A549 (cell line): ENCODE measurements at regions of chr12 and their contacts with region 1.

Region 1: GRCh38 chr12:13023811-13024530 is 20.2 kb upstream of the FAM234B start:
- DNase-seq: peak; percentile 45 to 73
- ATAC-seq: peak; percentile 97 to 98
- H3K4me3 ChIP-seq: no peak overlapping the region
- H3K27ac ChIP-seq: no peak overlapping the region
- H3K4me1 ChIP-seq: no peaks in the 10 kb centered on the region
- CTCF ChIP-seq: peak; percentile 65
- EP300 ChIP-seq: no peak
- POLR2A ChIP-seq: no peak
- RAD21 ChIP-seq: peak; percentile 71 to 86

Region 2: GRCh38 chr12:13008741-13009380 is 15.1 kb before region 1 on chr12:
- CTCF ChIA-PET with region 1: interaction called, 12 read pairs
- POLR2A ChIA-PET with region 1: no interaction called
- DNase-seq: no peak
- ATAC-seq: no peak
- H3K4me3 ChIP-seq: no peak overlapping the region
- H3K27ac ChIP-seq: no peak overlapping the region
- H3K4me1 ChIP-seq: no peaks in the 10 kb centered on the region
- CTCF ChIP-seq: no peak
- EP300 ChIP-seq: no peak
- POLR2A ChIP-seq: no peak
- RAD21 ChIP-seq: no peak

Region 3: DNA sequence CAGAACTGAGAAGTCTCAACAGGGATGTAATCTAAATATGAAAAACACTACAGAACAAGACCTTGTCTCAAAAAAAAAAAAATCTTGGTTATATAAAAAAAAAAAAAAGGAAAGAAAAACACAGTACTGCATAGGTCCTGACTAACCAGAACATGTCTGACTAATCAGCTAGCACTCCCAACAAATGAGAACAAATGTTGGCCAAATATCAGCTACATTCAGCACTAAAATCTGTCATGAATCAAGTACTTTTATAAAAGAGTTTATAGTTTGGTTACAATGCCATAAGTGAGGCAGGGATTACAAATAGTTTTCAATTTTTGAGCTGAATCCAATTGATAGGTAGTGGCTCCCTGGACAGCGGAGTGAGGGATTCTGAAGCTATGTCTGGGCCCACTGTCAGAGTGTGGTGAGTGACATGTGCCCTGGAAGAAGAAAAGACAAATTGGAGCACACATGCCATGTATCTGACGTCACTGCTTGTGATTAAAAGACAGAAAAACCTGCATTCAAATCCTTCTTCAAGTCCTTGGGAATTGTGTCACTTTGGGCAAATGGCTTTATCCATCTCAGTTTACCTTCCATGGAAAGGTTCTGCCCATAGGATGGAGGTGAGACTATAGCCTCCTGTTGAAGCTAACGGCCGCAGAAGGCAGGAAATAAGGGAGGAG is 14.7 kb after region 1 on chr12:
- CTCF ChIA-PET with region 1: interaction called, 22 read pairs
- POLR2A ChIA-PET with region 1: no interaction called
- DNase-seq: no peak
- ATAC-seq: no peak
- H3K4me3 ChIP-seq: no peak overlapping the region
- H3K27ac ChIP-seq: no peak overlapping the region
- H3K4me1 ChIP-seq: no peaks in the 10 kb centered on the region
- CTCF ChIP-seq: no peak
- EP300 ChIP-seq: no peak
- POLR2A ChIP-seq: no peak
- RAD21 ChIP-seq: no peak

Region 4: DNA sequence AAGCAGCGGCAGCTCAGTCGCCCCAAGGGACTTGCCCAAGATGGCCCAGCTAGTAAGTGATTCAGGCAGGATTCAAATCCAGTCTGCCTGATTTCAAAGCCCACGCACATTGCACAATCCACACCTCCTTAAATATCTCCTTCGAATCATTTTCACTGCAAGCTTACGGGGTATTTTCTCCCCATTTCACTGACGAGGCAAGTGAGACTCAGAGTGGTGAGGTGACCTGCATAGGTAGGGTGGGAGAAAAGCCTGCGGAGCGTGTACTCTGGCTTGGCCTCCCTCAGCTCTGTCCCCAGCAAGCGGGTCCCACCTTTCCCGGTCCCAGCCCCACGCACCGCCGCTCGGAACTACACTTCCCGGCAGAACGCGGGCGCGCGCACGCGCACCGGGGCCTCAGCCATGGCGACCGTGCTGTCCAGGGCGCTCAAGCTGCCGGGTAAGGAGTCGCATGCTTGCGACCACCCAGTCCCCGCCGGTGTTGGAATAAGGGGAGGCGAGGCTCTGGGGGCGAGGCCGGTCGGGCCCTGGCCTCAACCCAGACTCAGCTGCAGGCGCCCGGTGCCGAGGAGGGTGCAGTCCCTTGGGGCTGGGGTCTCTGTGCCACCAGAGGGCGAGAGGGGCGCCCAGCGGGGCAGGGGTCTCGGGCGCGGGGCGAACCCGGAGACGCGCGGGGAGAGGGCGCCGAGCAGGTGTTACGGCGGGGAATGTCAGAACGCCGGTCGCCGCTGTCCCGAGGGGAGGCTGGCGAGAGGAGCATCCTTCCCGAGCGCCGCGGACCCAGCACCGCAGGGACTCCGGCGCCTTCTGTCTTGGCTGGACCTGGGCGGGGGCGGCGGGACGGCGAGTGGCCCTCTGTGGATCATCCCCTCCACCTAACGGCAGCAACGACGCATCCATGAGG is 20.3 kb after region 1 on chr12 and contains the start of gene FAM234B:
- CTCF ChIA-PET with region 1: interaction called, 13 read pairs
- POLR2A ChIA-PET with region 1: no interaction called
- DNase-seq: peak; percentile 74 to 88
- ATAC-seq: peak; percentile 97 to 99
- H3K4me3 ChIP-seq: peak within 1 kb of the TSS; percentile 97
- H3K27ac ChIP-seq: peak within 1 kb of the TSS; percentile 83 to 92
- H3K4me1 ChIP-seq: peaks cover 8% of the 10 kb centered on the region; the same call in 1 of the 3 replicates
- CTCF ChIP-seq: peak; percentile 28
- EP300 ChIP-seq: no peak
- POLR2A ChIP-seq: peak; percentile 86
- RAD21 ChIP-seq: no peak
- polyA plus RNA-seq, gene FAM234B: 7.4 and 7.5 TPM in 2 replicates

Region 5: GRCh38 chr12:13124661-13125505 is 100.9 kb after region 1 on chr12:
- CTCF ChIA-PET with region 1: no interaction called
- POLR2A ChIA-PET with region 1: no interaction called
- DNase-seq: peak in 1 of 2 experiments; percentile 59
- ATAC-seq: peak; percentile 84 to 88
- H3K4me3 ChIP-seq: no peak overlapping the region
- H3K27ac ChIP-seq: peak overlapping the region; percentile 38 to 48; a peak in 4 of 6 replicates
- H3K4me1 ChIP-seq: peaks cover 44% of the 10 kb centered on the region
- CTCF ChIP-seq: no peak
- EP300 ChIP-seq: no peak
- POLR2A ChIP-seq: no peak
- RAD21 ChIP-seq: no peak